B cell (primary cell): ENCODE measurements at regions of chr5 and their contacts with region 1.

Region 1: GRCh38 chr5:1641560-1642166 is 117.9 kb upstream of the LPCAT1 start:
- DNase-seq: peak; percentile 82
- ATAC-seq: peak; percentile 80
- H3K4me3 ChIP-seq: no peak overlapping the region
- H3K4me3 Mint-ChIP-seq: no peak overlapping the region
- H3K27ac ChIP-seq: no peak overlapping the region
- H3K27ac Mint-ChIP-seq: no peak overlapping the region
- H3K4me1 ChIP-seq: peaks cover 10 to 14% of the 10 kb centered on the region in 2 donors
- H3K4me1 Mint-ChIP-seq: peaks cover 12% of the 10 kb centered on the region
- H3K27me3 ChIP-seq: peaks cover 0 to 32% (median 18%) of the 10 kb centered on the region in 4 experiments
- H3K27me3 Mint-ChIP-seq: peaks cover 29% of the 10 kb centered on the region
- CTCF ChIP-seq: peak; percentile 99

Region 2: DNA sequence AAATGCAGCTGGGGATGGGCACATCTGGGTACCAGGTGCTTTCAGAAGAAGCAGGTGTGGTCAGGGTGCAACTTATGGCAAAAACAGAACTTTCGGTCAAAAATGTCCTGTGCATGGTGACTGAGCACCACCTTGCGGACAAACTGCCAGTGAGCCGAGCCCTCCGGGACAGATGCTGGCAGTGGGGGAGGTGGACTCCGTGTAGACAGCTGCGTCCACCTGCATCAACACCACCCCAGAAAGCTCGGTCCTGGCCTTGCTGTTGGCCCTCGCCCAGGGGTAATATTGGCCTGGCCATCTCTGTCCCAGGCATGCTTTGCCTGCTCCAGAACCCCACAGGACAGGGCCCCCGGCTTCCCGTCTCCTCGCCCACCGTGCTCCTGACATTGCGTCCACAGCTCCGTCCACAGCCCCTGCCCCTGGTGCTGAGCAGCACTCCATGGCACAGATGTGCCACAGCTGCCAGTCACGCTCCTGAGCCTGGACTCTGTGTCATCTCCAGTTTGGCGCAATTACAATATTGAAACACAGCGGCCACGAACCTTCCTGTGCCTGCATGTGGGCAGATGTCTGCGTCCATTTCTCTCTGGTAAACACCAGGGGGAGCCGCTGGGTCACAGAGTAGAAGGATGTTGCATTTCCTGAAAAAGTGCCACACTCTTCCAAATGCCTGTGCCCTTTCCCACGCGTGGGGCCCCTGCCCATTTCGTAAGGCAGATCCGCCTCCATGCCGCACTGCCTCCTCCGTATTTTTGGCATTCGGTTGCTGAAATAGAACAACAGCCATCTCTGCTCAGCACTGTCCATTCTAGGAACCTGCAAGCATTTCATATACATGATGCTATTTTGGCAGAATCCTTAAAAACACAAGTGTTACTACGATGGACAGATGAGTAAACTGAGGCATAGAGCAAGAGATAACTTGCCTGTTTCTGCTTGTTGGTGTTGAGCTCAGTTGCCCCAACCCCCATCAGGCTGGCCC is 473.6 kb before region 1 on chr5:
- CTCF ChIA-PET with region 1: interaction called, 84 read pairs
- POLR2A ChIA-PET with region 1: interaction called, 3 read pairs
- intact Hi-C with region 1: loop called (anchors 1 kb)
- DNase-seq: peak; percentile 83
- ATAC-seq: peak; percentile 79
- H3K4me3 ChIP-seq: peak overlapping the region in 3 of 5 experiments; percentile 33 to 43 (median 43)
- H3K4me3 Mint-ChIP-seq: peak overlapping the region; percentile 84
- H3K27ac ChIP-seq: no peak overlapping the region
- H3K27ac Mint-ChIP-seq: no peak overlapping the region
- H3K4me1 ChIP-seq: peaks cover 8 to 13% of the 10 kb centered on the region in 2 donors
- H3K4me1 Mint-ChIP-seq: peaks cover 13% of the 10 kb centered on the region
- H3K27me3 ChIP-seq: peaks cover 0 to 3% (median 0%) of the 10 kb centered on the region in 4 experiments
- H3K27me3 Mint-ChIP-seq: peaks cover 10% of the 10 kb centered on the region
- CTCF ChIP-seq: peak; percentile 80

Region 3: DNA sequence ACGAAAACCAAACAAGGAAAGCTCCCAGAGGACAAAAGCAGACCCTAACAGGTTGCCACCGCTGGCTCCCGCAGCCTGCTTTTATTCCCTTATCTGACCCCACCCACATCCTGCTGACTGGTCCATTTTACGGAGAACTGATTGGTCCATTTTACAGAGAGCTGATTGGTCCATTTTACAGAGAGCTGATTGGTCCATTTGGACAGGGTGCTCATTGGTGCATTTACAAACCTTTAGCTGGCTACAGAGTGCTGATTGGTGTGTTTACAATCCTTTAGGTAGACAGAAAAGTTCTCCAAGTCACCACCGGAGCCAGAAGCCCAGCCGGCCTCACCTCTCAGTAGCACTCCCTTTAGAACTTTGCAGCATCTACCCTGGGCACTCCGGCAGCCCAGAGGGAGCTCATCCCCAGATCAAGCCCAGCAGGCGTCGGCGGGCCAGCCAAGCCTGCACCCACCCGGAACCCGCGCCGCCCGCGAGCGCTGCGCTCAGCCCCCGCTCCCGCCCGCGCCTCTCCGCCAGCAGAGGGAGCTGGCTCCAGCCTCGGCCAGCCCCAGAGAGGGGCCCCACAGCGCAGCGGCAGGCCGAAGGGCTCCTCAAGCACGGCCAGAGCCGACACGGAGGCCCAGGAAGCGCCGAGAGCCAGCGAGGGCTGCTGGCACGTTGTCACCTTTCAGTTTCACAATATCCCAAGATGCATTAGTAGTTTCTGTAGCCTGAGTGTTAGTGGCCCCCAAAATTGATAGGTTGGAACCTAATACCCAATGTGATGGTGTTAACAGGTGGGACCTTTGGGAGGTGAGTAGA is 261.4 kb before region 1 on chr5:
- CTCF ChIA-PET with region 1: interaction called, 15 read pairs
- POLR2A ChIA-PET with region 1: no interaction called
- intact Hi-C with region 1: loop called (anchors 1 kb)
- DNase-seq: peak; percentile 83
- ATAC-seq: peak; percentile 93
- H3K4me3 ChIP-seq: peak overlapping the region in 4 of 5 experiments; percentile 21 to 56 (median 39)
- H3K4me3 Mint-ChIP-seq: peak overlapping the region; percentile 85
- H3K27ac ChIP-seq: no peak overlapping the region
- H3K27ac Mint-ChIP-seq: peak overlapping the region; percentile 74
- H3K4me1 ChIP-seq: peaks cover 5 to 12% of the 10 kb centered on the region in 2 donors
- H3K4me1 Mint-ChIP-seq: peaks cover 22% of the 10 kb centered on the region
- H3K27me3 ChIP-seq: no peaks in the 10 kb centered on the region
- H3K27me3 Mint-ChIP-seq: no peaks in the 10 kb centered on the region
- CTCF ChIP-seq: peak; percentile 96

Region 4: GRCh38 chr5:1494780-1495524 is 146.7 kb before region 1 on chr5:
- CTCF ChIA-PET with region 1: interaction called, 10 read pairs
- POLR2A ChIA-PET with region 1: no interaction called
- intact Hi-C with region 1: no loop called
- DNase-seq: peak; percentile 91
- ATAC-seq: peak; percentile 72
- H3K4me3 ChIP-seq: peak overlapping the region in 4 of 5 experiments; percentile 41 to 60 (median 55)
- H3K4me3 Mint-ChIP-seq: peak overlapping the region; percentile 87
- H3K27ac ChIP-seq: peak overlapping the region; percentile 95 to 96
- H3K27ac Mint-ChIP-seq: peak overlapping the region; percentile 98
- H3K4me1 ChIP-seq: peaks cover 90 to 99% of the 10 kb centered on the region in 2 donors
- H3K4me1 Mint-ChIP-seq: peaks cover 99% of the 10 kb centered on the region
- H3K27me3 ChIP-seq: no peaks in the 10 kb centered on the region
- H3K27me3 Mint-ChIP-seq: no peaks in the 10 kb centered on the region
- CTCF ChIP-seq: peak; percentile 16